ENCODE measurements at regions of chr12 and their contacts with region 1.

Region 1: DNA sequence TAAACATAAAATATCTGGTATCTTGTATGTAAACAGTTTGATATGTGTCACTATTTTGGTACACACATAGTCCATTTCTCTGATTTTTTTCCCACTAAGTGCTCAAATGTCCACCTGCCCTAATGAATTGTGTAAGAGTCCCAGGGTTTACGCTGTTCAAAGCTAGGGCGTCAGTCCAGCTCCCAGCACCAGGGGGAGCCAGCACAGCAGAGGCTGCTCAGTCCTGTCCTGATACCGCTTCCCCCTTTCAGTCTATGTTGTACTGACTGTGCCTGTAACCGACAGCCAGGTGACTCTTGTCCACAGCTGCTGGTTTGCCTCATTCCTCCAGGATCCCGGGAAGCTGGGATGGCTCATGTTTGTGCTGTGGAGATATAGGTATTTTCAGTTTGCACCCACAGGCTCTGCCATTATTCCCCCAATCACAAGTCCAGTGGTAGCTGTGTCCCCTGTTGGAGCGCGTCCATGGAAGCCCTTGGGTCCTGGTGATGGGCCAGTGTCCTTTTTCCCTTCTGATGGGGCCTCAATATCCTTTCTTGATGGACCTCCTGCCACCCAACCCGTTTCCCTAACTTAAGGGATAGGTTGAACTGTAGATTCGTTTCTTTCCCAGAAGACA is 242.0 kb downstream of the NEDD1 start:
- DNase-seq: peak; percentile 68
- H3K4me3 Mint-ChIP-seq: no peak overlapping the region
- H3K27ac Mint-ChIP-seq: no peak overlapping the region
- H3K4me1 Mint-ChIP-seq: no peaks in the 10 kb centered on the region
- H3K27me3 Mint-ChIP-seq: peaks cover 7% of the 10 kb centered on the region

Region 2: DNA sequence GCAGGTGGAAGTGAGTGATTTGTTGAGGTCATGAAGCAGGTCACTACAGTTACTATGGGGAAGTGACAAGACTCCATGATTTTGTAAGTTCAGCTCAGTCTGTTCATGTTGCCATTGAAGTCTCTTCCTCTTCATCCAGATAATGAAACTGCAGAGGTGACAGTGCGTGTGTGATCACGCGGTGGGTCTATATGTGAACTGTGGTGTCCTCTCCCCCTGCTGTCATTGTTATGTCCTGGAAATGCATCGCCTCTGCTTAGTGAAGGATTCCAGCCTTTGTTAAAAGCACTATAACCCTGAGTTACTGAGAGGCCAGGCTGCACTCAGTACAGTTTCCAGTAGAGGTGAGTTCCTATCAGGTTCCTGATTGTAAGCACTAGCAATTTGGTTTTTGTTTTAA is 97.3 kb after region 1 on chr12:
- CTCF ChIA-PET with region 1: no interaction called
- POLR2A ChIA-PET with region 1: no interaction called
- intact Hi-C with region 1: no loop called
- DNase-seq: no peak
- H3K4me3 Mint-ChIP-seq: no peak overlapping the region
- H3K27ac Mint-ChIP-seq: no peak overlapping the region
- H3K4me1 Mint-ChIP-seq: no peaks in the 10 kb centered on the region
- H3K27me3 Mint-ChIP-seq: peaks cover 3% of the 10 kb centered on the region

Region 3: GRCh38 chr12:97308576-97309198 is 159.6 kb after region 1 on chr12:
- CTCF ChIA-PET with region 1: interaction called, 6 read pairs
- POLR2A ChIA-PET with region 1: no interaction called
- intact Hi-C with region 1: loop called (anchors 1 kb)
- DNase-seq: no peak
- H3K4me3 Mint-ChIP-seq: no peak overlapping the region
- H3K27ac Mint-ChIP-seq: no peak overlapping the region
- H3K4me1 Mint-ChIP-seq: no peaks in the 10 kb centered on the region
- H3K27me3 Mint-ChIP-seq: peaks cover 7% of the 10 kb centered on the region

Region 4: GRCh38 chr12:97386133-97386581 is 237.1 kb after region 1 on chr12:
- CTCF ChIA-PET with region 1: no interaction called
- POLR2A ChIA-PET with region 1: no interaction called
- intact Hi-C with region 1: no loop called
- DNase-seq: no peak
- H3K4me3 Mint-ChIP-seq: no peak overlapping the region
- H3K27ac Mint-ChIP-seq: no peak overlapping the region
- H3K4me1 Mint-ChIP-seq: no peaks in the 10 kb centered on the region
- H3K27me3 Mint-ChIP-seq: no peaks in the 10 kb centered on the region

Region 5: DNA sequence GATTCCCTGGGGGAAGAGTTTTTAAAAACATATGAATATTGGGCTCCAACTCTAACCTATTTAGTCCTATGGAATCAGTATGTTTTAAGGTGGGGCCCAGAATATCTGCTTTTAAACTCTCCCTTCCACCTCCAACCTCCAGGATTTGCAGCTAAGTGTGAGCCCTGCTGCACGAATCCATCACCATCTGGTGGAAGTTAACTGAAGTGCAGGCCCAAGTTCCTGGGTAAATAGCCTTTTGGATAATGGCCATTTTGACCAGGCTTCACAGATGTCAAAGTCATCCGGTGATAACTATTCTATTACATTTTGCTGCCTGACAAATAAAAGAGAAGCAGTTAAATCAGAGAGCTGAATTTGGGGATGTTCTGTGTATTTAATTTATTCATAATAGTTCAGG is 255.5 kb after region 1 on chr12:
- CTCF ChIA-PET with region 1: interaction called, 4 read pairs
- POLR2A ChIA-PET with region 1: no interaction called
- intact Hi-C with region 1: loop called (anchors 1 kb)
- DNase-seq: peak; percentile 11
- H3K4me3 Mint-ChIP-seq: no peak overlapping the region
- H3K27ac Mint-ChIP-seq: no peak overlapping the region
- H3K4me1 Mint-ChIP-seq: no peaks in the 10 kb centered on the region
- H3K27me3 Mint-ChIP-seq: no peaks in the 10 kb centered on the region

Measured in activated CD4-positive, alpha-beta memory T cell treated with anti-CD3 and anti-CD28 coated beads for 36 hours (primary cell).